ENCODE measurements at regions of chr9 and their contacts with region 1.

Region 1: GRCh38 chr9:32881948-32882347 is 98.6 kb downstream of the TMEM215 start:
- DNase-seq: no peak

Region 2: GRCh38 chr9:32596096-32596865 is 285.7 kb before region 1 on chr9:
- intact Hi-C with region 1: no loop called
- DNase-seq: no peak

Region 3: GRCh38 chr9:32764140-32764539 is 117.8 kb before region 1 on chr9:
- intact Hi-C with region 1: no loop called
- DNase-seq: no peak

Region 4: GRCh38 chr9:32823551-32823950 is 58.4 kb before region 1 on chr9:
- intact Hi-C with region 1: loop called in 1 of 2 experiments (anchors 10 kb)
- DNase-seq: no peak

Region 5: DNA sequence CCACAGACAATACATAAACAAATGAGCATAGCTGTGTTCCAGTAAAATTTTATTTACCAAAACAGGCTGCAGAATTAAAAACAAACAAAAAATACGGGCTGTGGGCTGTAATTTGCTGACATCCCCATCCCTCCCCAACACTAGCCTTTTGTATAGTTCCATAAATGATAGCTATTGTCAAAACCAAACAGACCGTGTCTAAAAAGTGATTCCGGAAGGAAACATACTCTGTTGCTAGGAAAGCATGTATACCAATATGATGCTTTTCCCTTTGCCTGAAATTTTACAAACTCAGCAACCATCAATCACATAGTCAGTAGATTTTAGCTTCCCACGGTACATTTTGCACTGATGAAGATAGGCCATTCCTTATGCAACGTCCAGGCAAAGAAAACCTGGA is 18.7 kb before region 1 on chr9:
- intact Hi-C with region 1: loop called in 1 of 2 experiments (anchors 2 kb)
- DNase-seq: no peak

Region 6: GRCh38 chr9:32906213-32906612 is 24.3 kb after region 1 on chr9:
- intact Hi-C with region 1: no loop called
- DNase-seq: no peak

Region 7: DNA sequence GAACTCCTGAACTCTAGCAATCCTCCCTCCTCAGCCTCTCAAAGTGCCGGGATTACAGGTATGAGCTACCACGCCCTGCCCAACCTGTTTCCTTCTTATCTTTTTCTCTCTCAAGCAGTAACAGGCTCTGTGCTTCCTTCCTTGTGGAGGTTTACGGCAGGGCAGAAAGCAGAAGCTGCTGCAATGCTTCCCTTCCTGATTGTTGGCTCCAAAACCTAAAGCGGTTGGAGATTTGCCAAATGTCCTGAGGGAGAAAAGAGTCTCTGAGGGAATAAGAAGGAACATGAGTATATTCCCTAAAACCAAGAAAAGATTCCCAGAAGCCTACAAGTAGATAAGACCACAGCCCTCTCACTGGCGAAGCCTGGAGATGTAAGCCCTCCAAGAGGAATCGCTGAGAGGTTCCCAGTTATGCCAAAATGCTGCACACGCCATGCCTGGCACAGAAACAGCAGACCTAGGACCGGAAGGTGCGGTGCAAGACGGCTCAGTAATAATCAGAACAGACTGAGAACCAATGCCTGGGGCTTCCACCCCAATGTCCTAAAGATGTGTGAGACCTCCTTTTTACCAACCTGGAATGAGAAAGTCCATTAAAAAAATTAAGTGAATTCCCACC is 46.3 kb after region 1 on chr9:
- intact Hi-C with region 1: no loop called
- DNase-seq: no peak